Psoas muscle (tissue), 8 donors: ENCODE measurements at regions of chr5 and their contacts with region 1.

Region 1: DNA sequence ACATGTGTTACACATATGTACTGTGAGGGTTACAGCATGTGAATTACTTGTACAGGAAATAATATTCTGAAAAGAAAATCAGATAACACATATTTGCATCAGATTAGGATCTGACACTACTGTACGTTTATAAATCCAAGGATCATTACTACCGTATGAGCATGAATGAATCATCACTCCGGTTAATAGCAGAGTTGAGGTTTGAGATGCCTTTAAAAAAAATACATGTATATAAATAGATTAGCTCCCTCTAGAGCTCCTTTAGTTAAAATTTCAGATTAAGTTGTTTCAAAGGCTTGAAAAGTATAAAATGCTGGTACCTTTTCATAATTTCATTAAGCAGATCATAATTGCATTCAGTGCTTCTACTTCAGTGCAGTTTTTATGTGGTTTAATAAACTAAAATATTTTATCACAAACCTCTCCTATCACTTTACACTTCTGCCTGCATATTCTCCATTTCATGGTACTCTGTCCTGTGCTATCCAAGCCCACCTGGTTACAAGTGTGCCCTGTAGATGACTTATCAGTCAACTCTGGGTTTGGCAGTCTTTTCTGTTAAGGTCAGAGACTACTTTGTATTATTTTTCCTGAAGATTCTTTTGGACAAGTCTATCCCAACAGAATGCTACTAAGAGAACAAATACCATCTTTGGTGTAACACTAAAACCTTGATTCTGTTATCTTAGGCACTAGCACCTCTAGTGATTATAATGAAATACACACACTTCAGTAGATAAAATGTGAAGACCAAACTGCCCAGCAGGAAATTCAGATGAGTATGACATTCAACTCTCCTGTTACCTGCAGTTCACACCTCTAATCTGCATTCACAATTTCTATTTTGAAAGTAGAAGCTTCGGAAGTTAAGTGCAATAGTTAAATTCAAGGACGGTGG is 48.0 kb upstream of the POU5F2 start:
- DNase-seq: no peak
- ATAC-seq: no peak
- H3K4me3 ChIP-seq: no peak overlapping the region
- H3K27ac ChIP-seq: no peak overlapping the region
- H3K4me1 ChIP-seq: no peaks in the 10 kb centered on the region
- H3K27me3 ChIP-seq: no peaks in the 10 kb centered on the region
- CTCF ChIP-seq: no peak

Region 2: GRCh38 chr5:92519756-92520632 is 1269.4 kb before region 1 on chr5:
- intact Hi-C with region 1: loop called in 1 of 2 experiments (anchors 5 kb)
- DNase-seq: no peak
- ATAC-seq: no peak
- H3K4me3 ChIP-seq: no peak overlapping the region
- H3K27ac ChIP-seq: no peak overlapping the region
- H3K4me1 ChIP-seq: no peaks in the 10 kb centered on the region
- H3K27me3 ChIP-seq: no peaks in the 10 kb centered on the region
- CTCF ChIP-seq: no peak

Region 3: GRCh38 chr5:93649234-93649900 is 140.1 kb before region 1 on chr5:
- intact Hi-C with region 1: no loop called
- DNase-seq: no peak
- ATAC-seq: no peak
- H3K4me3 ChIP-seq: no peak overlapping the region
- H3K27ac ChIP-seq: no peak overlapping the region
- H3K4me1 ChIP-seq: no peaks in the 10 kb centered on the region
- H3K27me3 ChIP-seq: no peaks in the 10 kb centered on the region
- CTCF ChIP-seq: no peak

Region 4: DNA sequence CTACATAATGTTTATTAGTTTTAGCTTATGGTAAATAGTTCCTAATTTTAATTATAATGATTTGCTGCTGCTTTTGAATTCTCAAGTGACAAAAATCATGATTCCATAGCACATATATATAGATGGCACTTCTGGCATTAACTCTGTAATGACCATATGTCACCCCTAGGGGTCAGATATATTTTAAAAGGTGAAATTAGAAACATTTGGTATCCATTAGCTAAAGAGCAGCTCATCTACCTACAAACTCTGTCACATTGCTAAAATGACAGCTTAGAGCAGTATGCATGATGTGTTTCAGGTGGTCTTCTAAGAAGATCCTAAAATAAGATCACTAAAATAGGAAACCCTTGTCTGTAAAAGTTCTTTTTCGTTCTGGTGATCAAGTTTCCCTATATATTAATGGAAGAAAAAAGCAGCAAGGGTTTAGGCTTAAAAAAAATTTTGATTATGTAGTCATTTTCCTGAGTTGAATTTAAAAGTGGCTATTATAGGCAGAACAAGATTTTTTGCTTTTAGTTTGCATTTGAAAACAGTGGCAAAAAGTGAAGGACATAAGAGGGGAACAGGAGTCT is 109.7 kb after region 1 on chr5:
- intact Hi-C with region 1: no loop called
- DNase-seq: no peak
- ATAC-seq: no peak
- H3K4me3 ChIP-seq: no peak overlapping the region
- H3K27ac ChIP-seq: no peak overlapping the region
- H3K4me1 ChIP-seq: no peaks in the 10 kb centered on the region
- H3K27me3 ChIP-seq: no peaks in the 10 kb centered on the region
- CTCF ChIP-seq: peak; percentile 21